ENCODE measurements at regions of chr17 and their contacts with region 1.

Region 1: GRCh38 chr17:31842183-31843069 is 16.6 kb downstream of the COPRS start:
- DNase-seq: peak; percentile 48
- ATAC-seq: peak; percentile 98
- H3K4me3 Mint-ChIP-seq: no peak overlapping the region
- H3K27ac Mint-ChIP-seq: no peak overlapping the region
- H3K4me1 Mint-ChIP-seq: no peaks in the 10 kb centered on the region
- H3K27me3 Mint-ChIP-seq: peaks cover 3% of the 10 kb centered on the region
- CTCF ChIP-seq: peak; percentile 51

Region 2: GRCh38 chr17:31388770-31389661 is 453.4 kb before region 1 on chr17:
- CTCF ChIA-PET with region 1: interaction called, 4 read pairs
- POLR2A ChIA-PET with region 1: no interaction called
- intact Hi-C with region 1: loop called (anchors 1 kb)
- DNase-seq: peak; percentile 46
- ATAC-seq: peak; percentile 76
- H3K4me3 Mint-ChIP-seq: no peak overlapping the region
- H3K27ac Mint-ChIP-seq: no peak overlapping the region
- H3K4me1 Mint-ChIP-seq: peaks cover 15% of the 10 kb centered on the region
- H3K27me3 Mint-ChIP-seq: peaks cover 31% of the 10 kb centered on the region
- CTCF ChIP-seq: no peak

Region 3: GRCh38 chr17:31549525-31550388 is 292.7 kb before region 1 on chr17:
- CTCF ChIA-PET with region 1: interaction called, 3 read pairs
- POLR2A ChIA-PET with region 1: interaction called, 3 read pairs
- intact Hi-C with region 1: loop called (anchors 1 kb)
- DNase-seq: peak; percentile 90
- ATAC-seq: peak; percentile 82
- H3K4me3 Mint-ChIP-seq: peak overlapping the region; percentile 88
- H3K27ac Mint-ChIP-seq: peak overlapping the region; percentile 90
- H3K4me1 Mint-ChIP-seq: peaks cover 25% of the 10 kb centered on the region
- H3K27me3 Mint-ChIP-seq: no peaks in the 10 kb centered on the region
- CTCF ChIP-seq: no peak

Region 4: DNA sequence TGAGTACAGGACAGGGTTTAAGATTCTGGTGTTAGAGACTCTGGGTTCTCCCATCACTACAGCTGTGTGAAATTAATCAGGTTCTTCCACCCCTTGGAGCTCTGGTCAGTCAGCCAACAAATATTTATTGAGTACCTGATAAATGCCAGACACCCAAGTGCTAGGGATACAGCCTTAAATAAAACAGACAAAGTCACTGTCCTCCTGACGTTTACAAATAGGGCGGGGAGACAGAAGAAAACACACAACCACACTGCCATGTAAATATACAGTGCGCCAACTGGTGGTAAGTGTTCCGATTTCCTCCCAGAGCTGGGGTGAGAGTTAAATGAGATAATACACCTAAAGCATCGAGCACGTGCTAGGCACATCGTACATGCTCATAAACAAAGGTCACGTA is 104.4 kb before region 1 on chr17:
- CTCF ChIA-PET with region 1: no interaction called
- POLR2A ChIA-PET with region 1: no interaction called
- intact Hi-C with region 1: no loop called
- DNase-seq: no peak
- ATAC-seq: no peak
- H3K4me3 Mint-ChIP-seq: no peak overlapping the region
- H3K27ac Mint-ChIP-seq: no peak overlapping the region
- H3K4me1 Mint-ChIP-seq: no peaks in the 10 kb centered on the region
- H3K27me3 Mint-ChIP-seq: peaks cover 16% of the 10 kb centered on the region
- CTCF ChIP-seq: no peak

Measured in activated B cell treated with CpG ODN at 0.5 μM for 24 hours (primary cell).